Activated T-helper 2 cell treated with anti-CD3 and anti-CD28 coated beads, Interferon-gamma antibody, Interleukin-2, Interleukin-4, amounts not matched to agents 10 μg/mL and 5 μg/mL and 100 μg/mL, durations not matched to agents 14 hours and 24 hours and 36 hours (primary cell): ENCODE measurements at regions of chr3 and their contacts with region 1.

Region 1: DNA sequence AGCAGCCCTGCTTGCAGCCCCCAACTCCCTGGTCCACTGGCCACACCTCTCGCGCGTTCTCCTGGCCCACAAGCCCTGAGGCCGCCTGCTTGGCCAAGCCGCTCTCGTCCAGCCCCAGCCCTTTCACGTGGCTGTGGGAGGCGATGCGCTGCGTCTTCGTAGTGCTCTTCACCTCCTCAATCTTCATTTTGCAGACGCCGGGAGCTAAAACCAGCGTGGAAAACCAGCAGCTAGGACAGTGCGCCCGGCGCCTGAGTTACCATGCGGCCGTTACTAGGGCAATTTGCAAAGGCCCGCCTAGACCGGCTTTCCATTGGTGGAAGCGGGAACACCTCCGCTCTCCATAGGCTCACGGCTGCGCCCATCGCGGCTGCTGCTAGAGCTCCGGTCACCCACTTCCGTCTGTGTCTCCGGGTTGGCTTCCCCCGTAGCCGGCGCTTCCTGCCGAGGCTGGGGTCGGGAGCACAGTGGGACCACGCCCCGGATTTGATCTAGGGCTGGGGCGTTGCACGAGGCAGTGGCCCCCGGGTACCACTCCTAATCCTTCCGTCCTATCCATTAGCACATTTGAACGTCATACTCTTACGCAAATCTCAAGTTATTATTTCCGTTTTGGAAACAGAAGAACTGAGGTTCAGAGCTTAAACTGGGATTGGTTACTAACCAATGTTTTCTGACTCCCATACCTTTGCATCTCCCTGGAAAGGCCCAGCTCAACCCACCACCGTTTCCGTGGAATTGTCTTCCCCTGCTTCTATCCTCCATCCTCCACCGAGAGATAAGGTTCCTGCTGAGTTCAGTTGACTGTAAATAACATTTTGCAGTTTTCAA is at the start of gene RUVBL1:
- DNase-seq: peak; percentile 96
- H3K4me3 Mint-ChIP-seq: peak within 1 kb of the TSS; percentile 98
- H3K27ac Mint-ChIP-seq: peak within 1 kb of the TSS; percentile 93
- H3K4me1 Mint-ChIP-seq: peaks cover 27% of the 10 kb centered on the region
- H3K27me3 Mint-ChIP-seq: no peaks in the 10 kb centered on the region
- total RNA-seq, gene RUVBL1: 111 and 112 TPM in 2 replicates

Region 2: DNA sequence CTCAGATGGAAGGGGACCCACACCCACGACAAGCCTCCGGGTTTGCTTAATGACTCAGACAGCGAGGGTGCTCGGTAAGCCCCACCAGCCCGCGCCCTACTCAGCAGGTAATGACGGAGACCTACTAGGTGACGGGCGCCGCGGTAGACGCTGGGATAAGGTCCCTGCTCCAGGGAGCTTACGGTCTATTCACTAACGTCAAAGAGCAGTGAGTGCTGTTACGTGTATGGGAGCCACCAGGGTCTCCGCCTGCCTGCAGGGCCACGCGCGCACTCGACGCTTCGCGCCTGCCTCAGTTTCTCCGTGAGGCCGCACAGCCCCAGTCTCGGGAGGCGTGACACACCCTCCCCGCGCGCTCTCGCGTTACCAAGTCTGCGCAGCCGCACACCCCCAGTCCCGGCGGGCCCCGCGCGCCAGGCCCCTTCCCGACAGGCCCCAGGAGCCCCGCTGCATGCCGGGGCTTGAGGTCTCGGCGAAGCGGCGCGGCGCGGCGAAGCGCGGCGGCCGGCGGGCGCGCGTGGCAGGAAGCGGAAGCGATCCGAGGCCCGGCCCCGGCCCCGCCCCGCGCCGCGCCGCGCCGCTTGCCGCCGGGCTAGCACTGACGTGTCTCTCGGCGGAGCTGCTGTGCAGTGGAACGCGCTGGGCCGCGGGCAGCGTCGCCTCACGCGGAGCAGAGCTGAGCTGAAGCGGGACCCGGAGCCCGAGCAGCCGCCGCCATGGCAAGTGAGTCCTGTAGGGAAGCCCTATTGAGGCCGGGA is 71.7 kb before region 1 on chr3 and contains the start of gene SEC61A1:
- intact Hi-C with region 1: loop called (anchors 2 kb)
- DNase-seq: peak; percentile 95
- H3K4me3 Mint-ChIP-seq: peak within 1 kb of the TSS; percentile 99
- H3K27ac Mint-ChIP-seq: peak within 1 kb of the TSS; percentile 99
- H3K4me1 Mint-ChIP-seq: peaks cover 38% of the 10 kb centered on the region
- H3K27me3 Mint-ChIP-seq: peaks cover 11% of the 10 kb centered on the region
- total RNA-seq, gene SEC61A1: 210 and 217 TPM in 2 replicates

Region 3: DNA sequence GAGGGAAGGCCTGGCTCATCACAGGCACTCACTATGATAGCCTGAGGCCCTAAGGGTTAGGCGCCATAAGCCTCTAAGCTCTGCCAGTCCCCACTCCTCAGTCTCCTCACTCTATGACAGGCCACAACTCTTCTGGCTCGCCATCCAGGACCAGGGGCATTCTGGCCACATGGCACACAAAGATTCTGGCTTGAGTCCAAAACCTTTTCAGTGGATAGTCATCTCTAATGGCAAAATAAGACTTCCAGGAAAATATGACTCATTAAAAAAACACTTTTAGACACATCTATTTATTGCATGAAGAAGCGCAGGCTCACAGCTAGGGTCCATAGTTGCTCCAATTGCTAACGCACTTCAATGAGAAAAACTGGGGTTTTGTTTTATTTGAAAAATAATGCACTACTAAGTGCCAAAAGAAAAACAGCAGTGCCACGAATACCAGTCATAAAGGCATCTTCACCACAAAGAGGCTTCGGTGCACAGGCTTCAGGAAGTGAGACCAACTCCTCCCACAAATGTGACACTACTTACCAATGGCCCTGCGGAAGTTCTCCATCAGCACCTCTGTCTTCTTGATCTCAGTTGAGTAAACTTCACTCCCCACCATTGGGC is 11.3 kb before region 1 on chr3:
- intact Hi-C with region 1: loop called (anchors 1 kb)
- DNase-seq: peak; percentile 32
- H3K4me3 Mint-ChIP-seq: peak overlapping the region; percentile 51
- H3K27ac Mint-ChIP-seq: peak overlapping the region; percentile 93
- H3K4me1 Mint-ChIP-seq: peaks cover 40% of the 10 kb centered on the region
- H3K27me3 Mint-ChIP-seq: no peaks in the 10 kb centered on the region

Region 4: GRCh38 chr3:128153156-128154041 is 29.6 kb after region 1 on chr3 and contains the start of gene EEFSEC:
- intact Hi-C with region 1: loop called (anchors 1 kb)
- DNase-seq: peak; percentile 82
- H3K4me3 Mint-ChIP-seq: peak within 1 kb of the TSS; percentile 83
- H3K27ac Mint-ChIP-seq: peak within 1 kb of the TSS; percentile 91
- H3K4me1 Mint-ChIP-seq: peaks cover 17% of the 10 kb centered on the region
- H3K27me3 Mint-ChIP-seq: no peaks in the 10 kb centered on the region
- total RNA-seq, gene EEFSEC: 22.0 and 23.8 TPM in 2 replicates